CD8-positive, alpha-beta T cell (primary cell): ENCODE measurements at regions of chr19 and their contacts with region 1.

Region 1: GRCh38 chr19:51904331-51905165 is at the start of gene ZNF649:
- DNase-seq: peak; percentile 56 to 88 (median 82)
- ATAC-seq: peak; percentile 92
- H3K4me3 ChIP-seq: peak within 1 kb of the TSS; percentile 84 to 91
- H3K4me3 Mint-ChIP-seq: peak within 1 kb of the TSS; percentile 100
- H3K27ac ChIP-seq: peak within 1 kb of the TSS; percentile 75 to 81
- H3K27ac Mint-ChIP-seq: peak within 1 kb of the TSS; percentile 98
- H3K4me1 ChIP-seq: peaks cover 10% of the 10 kb centered on the region
- H3K4me1 Mint-ChIP-seq: peaks cover 24% of the 10 kb centered on the region
- H3K27me3 ChIP-seq: no peaks in the 10 kb centered on the region
- H3K27me3 Mint-ChIP-seq: peaks cover 22% of the 10 kb centered on the region
- CTCF ChIP-seq: no peak
- total RNA-seq, gene ZNF649: 9.1 to 9.5 TPM

Region 2: DNA sequence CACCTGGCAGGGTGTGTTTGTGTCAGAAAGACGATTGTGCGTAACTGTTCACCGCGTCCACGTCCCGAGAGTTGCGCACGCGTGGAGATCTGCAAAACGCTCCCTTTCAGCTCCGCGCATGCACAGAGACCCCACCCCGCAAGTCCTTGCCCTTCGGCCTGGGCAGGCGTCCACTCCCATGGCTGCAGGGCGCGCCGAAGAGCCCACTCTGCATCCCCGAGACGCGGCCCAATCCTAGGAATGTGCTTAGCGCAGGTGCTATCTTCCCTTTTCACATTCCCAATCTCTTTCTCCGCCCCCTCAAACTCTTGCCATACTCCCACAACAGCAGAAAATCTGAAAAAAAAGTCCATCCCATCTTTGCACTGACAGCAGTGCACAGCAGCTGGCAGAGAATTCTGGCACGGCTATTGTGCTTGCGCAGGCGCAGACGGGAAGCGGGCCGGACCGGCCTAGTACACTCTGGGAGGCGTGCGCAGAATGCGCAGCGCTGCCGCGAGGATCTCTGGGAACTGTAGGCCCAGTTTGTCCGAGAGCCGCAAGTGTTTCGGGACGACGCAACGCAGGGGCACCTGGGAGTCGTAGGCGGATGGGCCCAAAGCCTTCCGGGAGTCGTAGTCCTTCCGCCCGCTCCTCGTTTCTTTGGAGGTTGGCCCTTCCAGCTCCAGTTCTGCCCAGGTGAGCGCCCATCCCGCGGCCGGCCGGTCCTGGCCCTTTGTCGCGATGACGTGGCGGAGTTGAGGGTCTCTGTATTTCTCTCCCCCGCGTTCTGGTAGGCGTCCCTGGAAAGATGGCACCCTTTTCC is 310.4 kb before region 1 on chr19:
- CTCF ChIA-PET with region 1: no interaction called
- POLR2A ChIA-PET with region 1: no interaction called
- intact Hi-C with region 1: loop called in 1 of 2 experiments (anchors 10 kb)
- DNase-seq: peak; percentile 86 to 97 (median 96)
- ATAC-seq: peak; percentile 100
- H3K4me3 ChIP-seq: peak overlapping the region; percentile 69 to 98
- H3K4me3 Mint-ChIP-seq: peak overlapping the region; percentile 99
- H3K27ac ChIP-seq: peak overlapping the region; percentile 50 to 73
- H3K27ac Mint-ChIP-seq: peak overlapping the region; percentile 87
- H3K4me1 ChIP-seq: peaks cover 18% of the 10 kb centered on the region
- H3K4me1 Mint-ChIP-seq: peaks cover 27% of the 10 kb centered on the region
- H3K27me3 ChIP-seq: no peaks in the 10 kb centered on the region
- H3K27me3 Mint-ChIP-seq: peaks cover 10% of the 10 kb centered on the region
- CTCF ChIP-seq: no peak

Region 3: DNA sequence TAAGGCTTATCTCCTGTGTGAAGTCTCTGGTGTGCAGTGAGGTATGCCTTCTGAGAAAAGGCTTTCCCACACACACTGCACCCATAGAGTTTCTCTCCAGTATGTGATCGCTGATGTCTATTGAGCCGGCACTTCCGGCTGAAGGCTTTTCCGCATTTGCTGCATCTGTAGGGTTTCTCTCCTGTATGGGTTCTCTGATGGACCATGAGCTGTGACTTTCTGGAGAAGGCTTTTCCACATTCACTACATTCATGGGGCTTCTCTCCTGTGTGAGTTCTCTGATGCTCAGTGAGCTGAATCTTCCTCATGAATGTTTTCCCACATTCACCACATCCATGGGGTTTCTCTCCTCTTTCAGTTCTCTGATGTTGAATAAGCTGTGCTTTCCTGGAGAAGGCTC is 31.5 kb before region 1 on chr19:
- CTCF ChIA-PET with region 1: no interaction called
- POLR2A ChIA-PET with region 1: no interaction called
- intact Hi-C with region 1: no loop called
- DNase-seq: no peak
- ATAC-seq: no peak
- H3K4me3 ChIP-seq: peak overlapping the region in 1 of 2 experiments; percentile 5
- H3K4me3 Mint-ChIP-seq: no peak overlapping the region
- H3K27ac ChIP-seq: no peak overlapping the region
- H3K27ac Mint-ChIP-seq: no peak overlapping the region
- H3K4me1 ChIP-seq: no peaks in the 10 kb centered on the region
- H3K4me1 Mint-ChIP-seq: no peaks in the 10 kb centered on the region
- H3K27me3 ChIP-seq: no peaks in the 10 kb centered on the region
- H3K27me3 Mint-ChIP-seq: no peaks in the 10 kb centered on the region
- CTCF ChIP-seq: no peak

Region 4: GRCh38 chr19:51887522-51888498 is 16.7 kb before region 1 on chr19 and contains the start of gene ZNF577:
- CTCF ChIA-PET with region 1: no interaction called
- POLR2A ChIA-PET with region 1: no interaction called
- intact Hi-C with region 1: loop called in 1 of 2 experiments (anchors 2 kb)
- DNase-seq: peak; percentile 10 to 77 (median 68)
- ATAC-seq: peak; percentile 85
- H3K4me3 ChIP-seq: peak within 1 kb of the TSS; percentile 11 to 43
- H3K4me3 Mint-ChIP-seq: peak within 1 kb of the TSS; percentile 88
- H3K27ac ChIP-seq: no peak within 1 kb of the TSS
- H3K27ac Mint-ChIP-seq: peak within 1 kb of the TSS; percentile 83
- H3K4me1 ChIP-seq: no peaks in the 10 kb centered on the region
- H3K4me1 Mint-ChIP-seq: peaks cover 3% of the 10 kb centered on the region
- H3K27me3 ChIP-seq: no peaks in the 10 kb centered on the region
- H3K27me3 Mint-ChIP-seq: no peaks in the 10 kb centered on the region
- CTCF ChIP-seq: no peak
- total RNA-seq, gene ZNF577: 5.6 to 8.1 TPM

Region 5: DNA sequence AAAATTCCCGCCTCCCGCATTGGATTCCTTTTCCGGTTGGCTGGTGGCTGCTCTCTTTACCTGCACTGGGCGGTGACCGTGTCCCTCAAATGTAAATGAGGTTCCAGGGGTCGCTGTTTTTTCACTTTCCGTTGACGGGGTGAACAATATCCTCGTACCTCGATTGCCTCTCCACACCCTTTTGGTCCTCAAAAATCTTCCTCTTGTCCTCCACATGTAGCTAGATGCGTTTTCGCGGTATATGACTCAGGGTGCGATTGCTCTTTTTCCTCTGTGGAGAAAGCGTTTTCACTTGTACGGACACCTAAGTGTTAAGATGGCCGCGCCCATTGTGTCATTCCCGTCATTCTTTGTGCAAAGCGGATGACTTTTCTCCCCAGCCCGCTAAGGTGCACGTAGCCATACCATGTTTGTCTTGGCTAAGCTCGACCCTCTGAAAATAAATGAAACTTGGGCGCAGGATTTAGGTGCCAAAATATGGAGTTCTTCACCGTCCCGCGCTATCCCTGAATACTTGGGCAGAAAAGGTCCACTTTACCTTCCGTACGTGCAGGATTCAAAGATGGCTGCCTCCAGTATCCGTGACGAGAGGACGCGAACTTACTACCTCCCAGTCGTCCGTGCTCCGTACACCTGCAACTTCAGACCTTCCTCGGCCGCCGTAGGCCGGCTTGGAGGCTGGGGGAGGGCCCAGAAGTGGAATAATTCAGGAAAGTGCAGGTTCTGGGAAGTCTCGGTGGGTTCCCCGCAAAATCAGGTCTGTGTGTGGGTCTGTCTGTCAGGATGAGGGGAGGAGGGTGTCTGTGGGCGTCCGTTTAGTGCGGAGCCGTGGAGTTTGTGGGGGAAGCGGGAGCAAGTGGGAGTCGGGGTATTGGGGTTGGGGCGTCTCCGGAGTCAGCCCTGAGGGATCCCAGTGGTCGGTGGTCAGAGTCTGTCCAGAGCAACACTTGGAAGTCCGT is 22.5 kb after region 1 on chr19 and contains the start of gene ZNF613:
- CTCF ChIA-PET with region 1: no interaction called
- POLR2A ChIA-PET with region 1: interaction called, 3 read pairs
- intact Hi-C with region 1: loop called (anchors 1 kb)
- DNase-seq: peak; percentile 63 to 92 (median 85)
- ATAC-seq: peak; percentile 86
- H3K4me3 ChIP-seq: peak within 1 kb of the TSS; percentile 88 to 95
- H3K4me3 Mint-ChIP-seq: peak within 1 kb of the TSS; percentile 95
- H3K27ac ChIP-seq: peak within 1 kb of the TSS; percentile 55 to 65
- H3K27ac Mint-ChIP-seq: peak within 1 kb of the TSS; percentile 91
- H3K4me1 ChIP-seq: peaks cover 7% of the 10 kb centered on the region
- H3K4me1 Mint-ChIP-seq: peaks cover 23% of the 10 kb centered on the region
- H3K27me3 ChIP-seq: no peaks in the 10 kb centered on the region
- H3K27me3 Mint-ChIP-seq: no peaks in the 10 kb centered on the region
- CTCF ChIP-seq: no peak
- total RNA-seq, gene ZNF613: 0.58 to 1.1 TPM

Region 6: GRCh38 chr19:51971624-51972023 is 67.1 kb after region 1 on chr19:
- CTCF ChIA-PET with region 1: no interaction called
- POLR2A ChIA-PET with region 1: no interaction called
- intact Hi-C with region 1: no loop called
- DNase-seq: peak in 3 of 9 experiments; percentile 8 to 42 (median 9)
- ATAC-seq: no peak
- H3K4me3 ChIP-seq: no peak overlapping the region
- H3K4me3 Mint-ChIP-seq: no peak overlapping the region
- H3K27ac ChIP-seq: no peak overlapping the region
- H3K27ac Mint-ChIP-seq: no peak overlapping the region
- H3K4me1 ChIP-seq: no peaks in the 10 kb centered on the region
- H3K4me1 Mint-ChIP-seq: no peaks in the 10 kb centered on the region
- H3K27me3 ChIP-seq: no peaks in the 10 kb centered on the region
- H3K27me3 Mint-ChIP-seq: no peaks in the 10 kb centered on the region
- CTCF ChIP-seq: no peak

Region 7: DNA sequence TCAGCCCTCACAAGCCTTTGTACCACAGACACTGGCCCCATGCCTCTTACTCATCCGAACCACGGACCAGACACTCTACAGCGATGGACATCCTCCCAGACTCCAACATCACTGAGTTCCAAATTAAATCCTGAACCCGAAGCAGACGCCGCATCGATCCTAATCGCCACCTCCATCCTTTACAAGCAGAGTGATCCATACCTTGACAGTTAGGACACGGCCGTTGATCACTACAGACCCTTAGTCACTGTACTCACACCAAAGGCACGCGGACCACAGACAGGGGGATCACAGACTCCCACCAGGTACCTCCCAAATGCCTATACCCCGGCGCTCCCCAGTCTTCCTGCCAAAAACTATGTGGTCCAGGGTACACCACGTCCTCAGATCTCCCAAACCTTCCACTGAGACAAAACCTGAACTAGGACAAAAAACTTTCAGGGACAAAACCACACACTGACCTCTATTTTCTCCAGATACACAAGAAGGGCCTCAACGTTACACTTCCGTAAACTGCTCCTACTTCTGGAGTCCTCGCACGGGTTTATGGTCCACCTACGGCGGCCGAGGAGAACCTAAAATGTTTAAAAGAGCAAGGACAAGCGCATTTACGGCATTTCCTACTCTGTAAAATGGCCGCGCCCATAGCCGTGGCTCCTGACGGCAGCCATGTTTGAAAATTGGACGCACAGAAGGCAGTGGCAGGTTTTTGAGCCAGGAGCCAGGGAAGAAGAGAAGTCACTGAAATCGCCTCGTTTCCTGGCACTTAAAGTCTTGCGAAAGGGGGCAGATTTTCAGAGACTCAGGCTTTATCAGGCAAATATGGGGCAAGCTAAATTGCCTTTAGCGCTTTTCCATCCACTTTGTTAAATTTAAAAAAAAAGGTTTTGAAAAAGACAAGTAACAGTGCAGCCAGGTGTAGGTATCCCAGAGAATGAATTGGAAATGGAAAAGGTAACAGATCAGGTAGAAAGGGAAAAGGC is 82.1 kb after region 1 on chr19 and contains the start of gene ZNF350:
- CTCF ChIA-PET with region 1: no interaction called
- POLR2A ChIA-PET with region 1: no interaction called
- intact Hi-C with region 1: loop called (anchors 1 kb)
- DNase-seq: peak; percentile 74 to 96 (median 88)
- ATAC-seq: peak; percentile 99
- H3K4me3 ChIP-seq: peak within 1 kb of the TSS; percentile 85 to 92
- H3K4me3 Mint-ChIP-seq: peak within 1 kb of the TSS; percentile 96
- H3K27ac ChIP-seq: peak within 1 kb of the TSS; percentile 71 to 77
- H3K27ac Mint-ChIP-seq: peak within 1 kb of the TSS; percentile 95
- H3K4me1 ChIP-seq: peaks cover 5% of the 10 kb centered on the region
- H3K4me1 Mint-ChIP-seq: peaks cover 21% of the 10 kb centered on the region
- H3K27me3 ChIP-seq: no peaks in the 10 kb centered on the region
- H3K27me3 Mint-ChIP-seq: no peaks in the 10 kb centered on the region
- CTCF ChIP-seq: no peak
- total RNA-seq, gene ZNF350: 48.1 to 50.8 TPM

Region 8: GRCh38 chr19:52007806-52008557 is 103.4 kb after region 1 on chr19 and contains the start of gene ZNF615:
- CTCF ChIA-PET with region 1: no interaction called
- POLR2A ChIA-PET with region 1: no interaction called
- intact Hi-C with region 1: loop called (anchors 1 kb)
- DNase-seq: peak; percentile 76 to 95 (median 89)
- ATAC-seq: peak; percentile 92
- H3K4me3 ChIP-seq: peak within 1 kb of the TSS; percentile 81 to 97
- H3K4me3 Mint-ChIP-seq: peak within 1 kb of the TSS; percentile 98
- H3K27ac ChIP-seq: peak within 1 kb of the TSS; percentile 78 to 89
- H3K27ac Mint-ChIP-seq: peak within 1 kb of the TSS; percentile 95
- H3K4me1 ChIP-seq: peaks cover 4% of the 10 kb centered on the region
- H3K4me1 Mint-ChIP-seq: peaks cover 21% of the 10 kb centered on the region
- H3K27me3 ChIP-seq: no peaks in the 10 kb centered on the region
- H3K27me3 Mint-ChIP-seq: no peaks in the 10 kb centered on the region
- CTCF ChIP-seq: no peak
- total RNA-seq, gene ZNF615: 14.7 to 17.2 TPM

Region 9: DNA sequence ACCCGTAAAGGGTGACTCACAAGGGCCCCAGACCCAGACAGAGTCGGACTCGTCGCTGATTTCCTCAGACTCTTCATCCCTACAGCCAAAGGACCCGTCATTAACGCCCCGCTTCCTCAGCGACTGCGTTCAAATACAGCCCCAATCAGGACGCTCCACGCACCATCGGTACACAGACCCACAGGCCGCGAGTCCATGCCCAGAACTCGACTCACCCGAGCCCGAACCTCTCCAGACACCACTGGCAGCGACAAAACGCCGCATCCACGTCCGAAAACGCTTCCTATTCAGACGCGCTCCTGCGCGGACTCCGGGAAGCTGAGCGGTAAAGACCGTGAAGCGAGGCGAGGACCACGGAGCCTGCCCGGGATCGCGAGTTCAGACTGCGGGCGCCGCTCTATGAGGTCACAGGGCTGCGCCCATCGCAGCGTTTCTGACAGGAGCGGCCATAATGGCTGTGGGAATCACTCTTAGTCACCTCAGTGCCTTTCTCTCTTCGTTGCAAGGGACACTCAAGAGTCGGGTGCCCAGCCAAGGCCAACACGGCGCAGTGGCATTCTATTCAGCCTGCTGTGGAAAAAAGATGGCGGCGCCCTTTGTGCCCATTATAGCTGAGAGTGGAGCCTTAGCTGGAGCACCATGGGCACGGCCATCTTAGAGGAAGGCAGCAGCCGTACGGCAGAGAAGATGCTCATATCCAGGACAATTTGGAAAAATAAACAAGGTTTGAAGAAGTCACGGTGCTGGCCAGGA is 123.7 kb after region 1 on chr19 and contains the start of gene ZNF614:
- CTCF ChIA-PET with region 1: no interaction called
- POLR2A ChIA-PET with region 1: no interaction called
- intact Hi-C with region 1: loop called in 1 of 2 experiments (anchors 1 kb)
- DNase-seq: peak; percentile 74 to 92 (median 85)
- ATAC-seq: peak; percentile 86
- H3K4me3 ChIP-seq: peak within 1 kb of the TSS; percentile 92 to 93
- H3K4me3 Mint-ChIP-seq: peak within 1 kb of the TSS; percentile 98
- H3K27ac ChIP-seq: peak within 1 kb of the TSS; percentile 93 to 94
- H3K27ac Mint-ChIP-seq: peak within 1 kb of the TSS; percentile 99
- H3K4me1 ChIP-seq: peaks cover 10% of the 10 kb centered on the region
- H3K4me1 Mint-ChIP-seq: peaks cover 30% of the 10 kb centered on the region
- H3K27me3 ChIP-seq: no peaks in the 10 kb centered on the region
- H3K27me3 Mint-ChIP-seq: no peaks in the 10 kb centered on the region
- CTCF ChIP-seq: no peak
- total RNA-seq, gene ZNF614: 10.6 to 11.4 TPM